ENCODE measurements at regions of chr1 and their contacts with region 1.

Region 1: DNA sequence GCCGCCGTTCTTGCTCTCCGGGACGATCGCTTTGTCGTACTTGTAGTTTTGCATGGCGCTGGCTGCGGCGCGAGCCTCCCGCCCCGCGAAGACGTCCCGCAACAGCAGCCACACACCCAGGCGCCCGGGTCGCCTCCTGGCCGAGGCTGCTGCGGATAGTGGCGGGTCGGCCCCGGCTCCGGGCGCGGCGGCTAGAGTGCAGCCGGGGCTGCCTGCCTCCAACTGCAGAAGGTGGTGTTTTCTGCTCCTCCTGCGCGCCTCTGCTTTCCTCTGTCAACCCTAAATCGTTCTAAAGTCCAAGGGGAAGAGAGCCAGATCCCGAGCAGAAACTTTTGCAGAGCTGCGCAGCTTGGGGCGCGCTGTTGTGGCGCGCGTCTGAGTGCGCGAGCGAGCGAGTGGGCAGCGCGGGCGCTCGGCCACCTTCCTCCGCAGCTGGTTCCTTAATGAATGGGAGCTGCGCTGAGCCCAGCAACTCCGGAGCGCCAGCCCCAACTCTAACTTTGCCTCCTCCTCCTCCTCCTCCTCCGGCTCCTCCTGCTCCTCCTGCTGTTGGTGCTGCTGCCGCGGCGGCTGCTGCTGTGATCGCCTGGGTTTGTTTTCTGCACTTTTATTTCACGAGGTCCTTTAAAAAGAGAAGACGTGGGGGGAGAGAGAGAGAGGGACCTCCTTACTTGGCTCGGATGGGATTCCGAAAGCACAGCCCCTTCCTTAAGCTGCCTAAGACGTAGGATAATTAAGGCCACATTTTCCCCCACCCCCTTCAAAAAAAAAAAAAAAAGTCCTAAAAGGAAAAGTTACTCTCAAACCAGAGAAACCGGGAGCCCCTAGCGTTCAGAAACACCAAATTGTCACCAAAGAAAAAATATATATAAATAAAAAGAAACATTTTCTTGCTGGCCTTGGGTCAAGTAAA is at the start of gene PLPP3:
- DNase-seq: peak; percentile 79
- ATAC-seq: peak; percentile 85
- H3K4me3 ChIP-seq: peak within 1 kb of the TSS; percentile 84 to 98 (median 87)
- H3K27ac ChIP-seq: peak within 1 kb of the TSS; percentile 96
- H3K4me1 ChIP-seq: peaks cover 46% of the 10 kb centered on the region
- H3K27me3 ChIP-seq: no peaks in the 10 kb centered on the region; a peak in 1 of 5 replicates
- CTCF ChIP-seq: peak; percentile 54
- EP300 ChIP-seq: peak in 1 of 2 experiments; percentile 10; a peak in 2 of 4 replicates
- POLR2A ChIP-seq: peak; percentile 86 to 95
- RAD21 ChIP-seq: peak; percentile 43; the same call in 1 of the 2 replicates
- total RNA-seq, gene PLPP3: 33.9 and 65.8 TPM in 2 replicates

Region 2: GRCh38 chr1:55868026-55868425 is 711.2 kb before region 1 on chr1:
- CTCF ChIA-PET with region 1: no interaction called
- POLR2A ChIA-PET with region 1: no interaction called
- in situ Hi-C with region 1: loop called (anchors 25 kb)
- intact Hi-C with region 1: loop called (anchors 10 kb)
- DNase-seq: peak; percentile 3
- ATAC-seq: no peak
- H3K4me3 ChIP-seq: no peak overlapping the region
- H3K27ac ChIP-seq: no peak overlapping the region
- H3K4me1 ChIP-seq: no peaks in the 10 kb centered on the region
- H3K27me3 ChIP-seq: 0 out of 5 replicates have a peak, but pooled peaks cover 0 to 4% of the 10 kb centered on the region in 2 experiments
- CTCF ChIP-seq: peak; percentile 9; the same call in 1 of the 2 replicates
- EP300 ChIP-seq: no peak
- POLR2A ChIP-seq: no peak
- RAD21 ChIP-seq: no peak

Region 3: DNA sequence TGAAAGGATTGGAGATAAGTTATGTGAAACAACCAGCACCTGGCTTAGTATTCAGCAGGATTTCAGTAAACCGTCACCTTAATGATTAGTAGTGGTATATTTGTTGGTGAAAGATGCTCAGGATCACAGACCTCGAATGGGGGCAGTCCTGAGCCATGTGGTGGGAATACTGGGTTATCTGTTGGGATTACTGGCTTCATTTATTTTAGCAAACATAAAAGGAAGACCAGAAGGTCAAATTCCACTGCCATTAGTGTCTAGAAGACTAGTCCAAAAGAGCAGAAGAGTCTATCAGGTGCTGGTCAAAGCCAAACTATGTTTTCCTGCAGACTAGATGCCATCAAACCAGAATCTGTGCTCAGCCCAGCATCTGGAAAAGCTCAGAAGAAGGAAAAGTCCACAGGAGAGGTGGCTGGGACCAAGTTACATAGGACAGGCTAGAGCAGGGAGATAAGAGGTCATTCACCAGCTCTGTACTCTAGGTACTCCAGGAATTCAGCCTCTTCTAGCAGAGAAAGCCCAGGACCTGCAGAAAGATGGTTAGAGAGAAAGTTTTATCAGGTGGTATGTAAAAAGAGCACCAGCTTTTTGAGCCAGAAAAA is 343.2 kb before region 1 on chr1:
- CTCF ChIA-PET with region 1: no interaction called
- POLR2A ChIA-PET with region 1: no interaction called
- in situ Hi-C with region 1: loop called (anchors 10 kb)
- intact Hi-C with region 1: loop called (anchors 2 kb)
- DNase-seq: peak; percentile 78
- ATAC-seq: peak; percentile 91
- H3K4me3 ChIP-seq: no peak overlapping the region
- H3K27ac ChIP-seq: no peak overlapping the region
- H3K4me1 ChIP-seq: peaks cover 19% of the 10 kb centered on the region
- H3K27me3 ChIP-seq: no peaks in the 10 kb centered on the region
- CTCF ChIP-seq: peak; percentile 64
- EP300 ChIP-seq: peak in 1 of 2 experiments; percentile 25; a peak in 1 of 4 replicates
- POLR2A ChIP-seq: no peak
- RAD21 ChIP-seq: no peak

Region 4: DNA sequence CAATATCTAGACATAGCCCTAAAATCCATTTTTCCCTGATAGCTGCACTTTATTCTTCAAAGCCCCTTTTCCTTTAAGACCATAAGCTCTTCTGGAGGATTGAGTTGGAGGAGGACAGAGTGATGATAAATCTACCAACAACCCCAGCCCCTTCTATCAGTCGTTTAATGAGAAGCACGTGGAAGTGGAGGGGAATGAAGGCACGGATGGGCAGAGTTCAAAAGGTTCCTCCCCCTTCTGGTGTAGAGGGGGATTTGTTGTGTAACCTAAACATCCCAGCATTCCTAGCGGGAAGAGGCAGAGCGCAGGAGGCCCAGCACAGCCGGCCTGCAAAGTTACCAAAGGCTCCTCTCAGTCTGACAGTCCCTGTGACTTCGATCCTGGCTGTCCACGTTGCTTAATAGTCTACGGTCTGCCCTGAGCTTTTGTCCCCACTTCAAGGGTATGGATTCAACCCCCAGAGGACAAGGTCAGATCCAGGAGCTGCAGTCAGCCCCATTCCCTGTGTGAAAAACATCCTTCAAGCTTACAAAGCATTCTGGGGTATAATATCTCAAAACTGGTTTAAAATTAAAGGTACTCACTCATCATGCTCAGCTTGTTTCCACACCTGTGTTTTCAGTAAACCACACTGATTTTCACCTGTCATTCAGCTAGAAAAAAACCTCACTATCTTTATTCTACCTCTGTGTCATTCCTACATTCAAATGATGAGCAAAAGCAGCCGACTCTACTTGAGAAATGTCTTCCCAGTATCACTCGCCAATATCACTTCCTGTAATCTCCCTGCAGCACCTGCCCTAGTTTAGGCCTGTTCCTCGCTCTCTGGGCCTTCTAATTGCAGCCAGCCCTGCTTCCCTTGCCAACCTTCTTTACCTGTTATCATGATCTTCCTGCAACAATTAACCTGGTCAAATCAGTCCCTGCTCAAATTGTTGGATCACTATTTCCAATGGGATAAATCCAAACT is 117.8 kb before region 1 on chr1:
- CTCF ChIA-PET with region 1: no interaction called
- POLR2A ChIA-PET with region 1: interaction called, 15 read pairs
- in situ Hi-C with region 1: no loop called
- intact Hi-C with region 1: no loop called
- DNase-seq: peak; percentile 95
- ATAC-seq: peak; percentile 99
- H3K4me3 ChIP-seq: peak overlapping the region in 1 of 3 experiments; percentile 3; a peak in 1 of 6 replicates
- H3K27ac ChIP-seq: peak overlapping the region; percentile 80
- H3K4me1 ChIP-seq: peaks cover 47% of the 10 kb centered on the region
- H3K27me3 ChIP-seq: no peaks in the 10 kb centered on the region
- CTCF ChIP-seq: peak; percentile 59
- EP300 ChIP-seq: peak; percentile 60 to 94; a peak in 3 of 4 replicates
- POLR2A ChIP-seq: peak in 1 of 2 experiments; percentile 62; a peak in 2 of 4 replicates
- RAD21 ChIP-seq: peak; percentile 57

Region 5: DNA sequence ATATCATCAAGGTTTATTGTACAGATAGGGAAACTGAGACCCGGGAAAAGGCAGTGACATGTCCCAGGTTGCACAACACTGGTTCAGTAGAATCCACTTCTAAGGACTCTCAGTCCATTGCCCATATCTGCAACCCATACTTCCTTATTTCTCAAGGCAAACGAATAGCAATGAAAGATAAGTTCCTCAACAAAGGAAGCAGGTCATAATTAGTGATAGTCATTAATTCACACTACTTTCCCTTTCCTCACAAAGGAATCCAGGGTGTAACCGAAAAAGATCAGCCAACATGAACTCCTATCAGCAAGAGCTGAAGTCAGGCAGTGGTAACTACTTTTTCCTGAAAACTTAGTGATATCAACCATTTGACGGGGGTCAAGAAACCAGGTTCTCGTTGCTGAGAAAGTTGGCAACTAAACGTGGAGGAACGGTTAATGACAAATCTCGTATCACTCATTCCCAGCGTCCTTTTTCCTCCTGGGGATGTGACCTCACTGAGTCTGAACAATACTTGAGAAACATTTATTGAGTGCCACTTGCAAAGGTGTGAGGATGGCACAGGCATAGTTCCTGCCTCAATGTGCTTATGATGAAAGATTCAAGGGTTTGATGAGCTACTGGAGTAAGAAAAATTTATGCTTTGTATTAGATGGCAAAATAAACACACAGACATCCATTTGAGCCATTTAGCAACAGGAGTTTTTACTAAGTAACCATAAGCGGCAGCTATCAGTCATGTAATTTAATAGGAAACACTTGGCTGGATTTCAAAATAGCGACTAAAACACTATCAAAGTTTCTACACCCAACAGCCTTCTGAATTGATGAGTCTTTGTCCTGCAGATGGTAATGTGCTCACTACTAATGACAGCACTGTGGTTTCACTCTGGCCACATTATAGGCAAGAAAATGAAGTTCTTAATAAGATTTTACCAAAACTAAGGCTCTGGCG is 82.1 kb before region 1 on chr1:
- CTCF ChIA-PET with region 1: no interaction called
- POLR2A ChIA-PET with region 1: interaction called, 16 read pairs
- in situ Hi-C with region 1: no loop called
- intact Hi-C with region 1: no loop called
- DNase-seq: no peak
- ATAC-seq: no peak
- H3K4me3 ChIP-seq: no peak overlapping the region
- H3K27ac ChIP-seq: peak overlapping the region; percentile 90
- H3K4me1 ChIP-seq: peaks cover 95% of the 10 kb centered on the region
- H3K27me3 ChIP-seq: no peaks in the 10 kb centered on the region
- CTCF ChIP-seq: no peak
- EP300 ChIP-seq: no peak
- POLR2A ChIP-seq: no peak
- RAD21 ChIP-seq: no peak

Region 6: DNA sequence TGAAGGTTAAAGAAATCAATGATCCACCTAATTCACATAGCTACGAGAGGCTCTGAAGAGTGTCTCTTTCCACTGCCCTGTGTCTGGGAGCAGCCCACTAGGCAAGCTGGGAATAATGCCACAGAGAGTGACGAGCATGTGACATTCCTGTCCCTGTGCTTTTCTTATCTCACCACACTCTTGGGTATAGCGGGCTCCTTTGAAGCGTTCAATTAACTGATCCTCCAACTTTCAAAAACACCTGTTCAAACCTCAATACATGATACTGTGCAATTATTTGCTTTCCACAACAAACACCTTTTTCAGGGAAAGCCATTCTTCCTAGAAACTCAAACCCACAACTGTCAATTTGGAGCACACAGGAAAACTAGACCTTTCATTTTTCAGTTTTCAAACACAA is 43.3 kb before region 1 on chr1:
- CTCF ChIA-PET with region 1: no interaction called
- POLR2A ChIA-PET with region 1: interaction called, 5 read pairs
- in situ Hi-C with region 1: no loop called
- intact Hi-C with region 1: loop called (anchors 2 kb)
- DNase-seq: peak; percentile 71
- ATAC-seq: peak; percentile 51
- H3K4me3 ChIP-seq: no peak overlapping the region
- H3K27ac ChIP-seq: no peak overlapping the region
- H3K4me1 ChIP-seq: peaks cover 99% of the 10 kb centered on the region
- H3K27me3 ChIP-seq: no peaks in the 10 kb centered on the region
- CTCF ChIP-seq: no peak
- EP300 ChIP-seq: peak in 1 of 2 experiments; percentile 78; a peak in 2 of 4 replicates
- POLR2A ChIP-seq: no peak
- RAD21 ChIP-seq: no peak

Measured in HepG2 (cell line).